ENCODE measurements at regions of chr17 and their contacts with region 1.

Region 1: GRCh38 chr17:35119368-35120165 is at the start of gene RAD51D:
- DNase-seq: peak; percentile 82
- ATAC-seq: peak; percentile 90
- H3K4me3 Mint-ChIP-seq: peak within 1 kb of the TSS; percentile 87
- H3K27ac Mint-ChIP-seq: no peak within 1 kb of the TSS
- H3K4me1 Mint-ChIP-seq: peaks cover 17% of the 10 kb centered on the region
- H3K27me3 Mint-ChIP-seq: peaks cover 29% of the 10 kb centered on the region
- CTCF ChIP-seq: peak; percentile 90
- total RNA-seq, gene RAD51D: 13.8 to 15.7 TPM (median 15.0 TPM) in 3 replicates

Region 2: GRCh38 chr17:34990921-34991365 is 128.6 kb before region 1 on chr17:
- CTCF ChIA-PET with region 1: interaction called, 12 read pairs
- POLR2A ChIA-PET with region 1: no interaction called
- DNase-seq: no peak
- ATAC-seq: no peak
- H3K4me3 Mint-ChIP-seq: no peak overlapping the region
- H3K27ac Mint-ChIP-seq: no peak overlapping the region
- H3K4me1 Mint-ChIP-seq: no peaks in the 10 kb centered on the region
- H3K27me3 Mint-ChIP-seq: no peaks in the 10 kb centered on the region
- CTCF ChIP-seq: no peak

Region 3: GRCh38 chr17:35227546-35227945 is 108.0 kb after region 1 on chr17:
- CTCF ChIA-PET with region 1: no interaction called
- POLR2A ChIA-PET with region 1: no interaction called
- DNase-seq: no peak
- ATAC-seq: no peak
- H3K4me3 Mint-ChIP-seq: no peak overlapping the region
- H3K27ac Mint-ChIP-seq: no peak overlapping the region
- H3K4me1 Mint-ChIP-seq: no peaks in the 10 kb centered on the region
- H3K27me3 Mint-ChIP-seq: peaks cover 7% of the 10 kb centered on the region
- CTCF ChIP-seq: no peak

Region 4: GRCh38 chr17:35242805-35243560 is 123.4 kb after region 1 on chr17 and contains the start of gene SLFN5:
- CTCF ChIA-PET with region 1: no interaction called
- POLR2A ChIA-PET with region 1: no interaction called
- DNase-seq: peak; percentile 91
- ATAC-seq: peak; percentile 87
- H3K4me3 Mint-ChIP-seq: peak within 1 kb of the TSS; percentile 89
- H3K27ac Mint-ChIP-seq: peak within 1 kb of the TSS; percentile 68
- H3K4me1 Mint-ChIP-seq: peaks cover 20% of the 10 kb centered on the region
- H3K27me3 Mint-ChIP-seq: peaks cover 8% of the 10 kb centered on the region; the same call in 1 of the 2 replicates
- CTCF ChIP-seq: no peak
- total RNA-seq, gene SLFN5: 4.8 to 7.6 TPM (median 6.0 TPM) in 3 replicates